PC-9 (cell line): ENCODE measurements at regions of chr12 and their contacts with region 1.

Region 1: DNA sequence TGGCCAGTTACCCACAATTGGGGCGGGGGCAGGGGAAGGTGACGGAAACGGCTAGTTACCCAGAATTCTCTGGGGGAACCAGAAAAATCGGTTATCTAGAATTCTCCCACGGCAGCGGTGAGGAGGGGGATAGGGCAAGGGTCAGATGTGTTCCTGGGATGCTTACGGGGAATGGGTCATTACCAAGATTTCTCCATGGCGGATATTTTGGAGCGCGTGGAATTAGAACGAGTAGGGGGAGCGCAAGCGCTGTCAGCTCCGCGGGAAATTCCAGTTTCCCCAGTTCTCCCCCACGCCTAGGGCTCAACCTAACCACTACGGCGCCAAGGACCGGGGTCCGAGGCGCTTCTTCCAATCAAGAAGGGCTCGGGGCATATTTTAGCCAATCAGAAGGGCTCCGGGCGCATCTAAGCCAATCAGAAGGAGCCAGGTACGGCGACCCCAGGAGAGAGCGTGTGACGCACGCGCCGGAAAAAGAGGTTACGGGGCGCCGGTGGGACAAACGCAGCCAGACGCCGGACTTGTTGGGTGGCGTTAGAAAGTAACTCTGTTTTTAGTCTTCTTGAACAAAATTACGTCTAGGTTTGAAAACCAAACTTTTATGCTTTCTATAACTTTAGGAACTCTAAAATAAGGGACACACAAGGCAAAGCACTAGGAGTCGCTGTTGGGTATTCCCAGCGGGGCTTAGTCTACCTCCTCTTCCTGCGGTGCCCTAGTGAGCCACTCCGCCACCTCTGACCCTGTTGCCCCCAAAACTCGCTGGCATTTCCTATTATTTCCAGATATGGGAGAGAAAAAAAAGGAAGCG is at the start of gene PAN2:
- DNase-seq: peak; percentile 92 to 93
- H3K4me3 ChIP-seq: peak within 1 kb of the TSS; percentile 88
- H3K27ac ChIP-seq: peak within 1 kb of the TSS; percentile 89
- H3K4me1 ChIP-seq: peaks cover 36% of the 10 kb centered on the region
- H3K27me3 ChIP-seq: no peaks in the 10 kb centered on the region
- CTCF ChIP-seq: peak; percentile 63
- total RNA-seq, gene PAN2: 78.1 and 82.8 TPM in 2 replicates

Region 2: DNA sequence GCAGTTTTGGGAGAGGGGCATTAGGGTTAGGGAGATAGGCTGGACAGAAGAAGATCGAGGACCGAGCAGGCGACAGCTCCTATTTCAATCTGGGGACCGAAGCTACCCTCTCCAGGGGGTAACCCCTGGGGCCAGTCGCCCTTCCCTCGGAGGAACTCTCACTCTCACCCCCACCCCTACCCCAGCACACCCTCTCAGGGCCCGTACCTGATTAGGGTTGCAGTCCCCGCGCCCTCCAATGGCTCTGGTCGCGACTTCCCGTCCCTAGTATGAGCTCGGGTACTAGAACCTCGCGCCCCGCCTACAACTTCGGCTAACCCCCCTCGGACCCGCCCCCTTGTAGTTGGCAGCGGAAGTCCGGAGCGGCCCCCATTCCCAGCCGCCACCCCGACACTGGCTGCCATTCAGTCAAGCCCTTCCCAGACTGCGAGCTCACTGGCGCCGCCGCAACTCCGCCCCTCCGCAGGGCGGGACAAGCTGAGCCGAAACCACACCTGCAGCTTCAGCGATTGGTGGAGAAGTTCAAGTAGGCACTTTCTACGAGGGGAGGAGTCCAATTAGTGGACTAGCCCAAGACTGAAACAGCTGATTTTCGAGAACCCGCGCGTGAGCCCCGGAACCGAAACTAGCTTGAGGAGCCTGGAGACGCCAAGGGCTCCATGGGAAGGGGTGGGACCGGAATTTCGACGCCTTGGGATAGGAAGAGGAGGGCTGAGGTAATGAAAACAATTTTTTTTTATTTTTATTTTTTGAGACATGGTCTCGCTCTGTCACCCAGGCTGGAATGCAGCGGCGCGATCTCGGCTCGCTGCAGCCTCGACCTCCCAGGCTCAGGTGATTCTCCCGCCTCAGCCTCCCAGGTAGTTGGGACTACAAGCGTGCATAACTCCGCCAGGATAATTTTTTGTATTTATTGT is 26.2 kb after region 1 on chr12 and contains the start of gene STAT2:
- CTCF ChIA-PET with region 1: interaction called, 3 read pairs
- POLR2A ChIA-PET with region 1: interaction called, 4 read pairs
- intact Hi-C with region 1: loop called (anchors 1 kb)
- DNase-seq: peak; percentile 99
- H3K4me3 ChIP-seq: peak within 1 kb of the TSS; percentile 79
- H3K27ac ChIP-seq: peak within 1 kb of the TSS; percentile 85
- H3K4me1 ChIP-seq: peaks cover 17% of the 10 kb centered on the region
- H3K27me3 ChIP-seq: no peaks in the 10 kb centered on the region
- CTCF ChIP-seq: no peak
- total RNA-seq, gene STAT2: 76.6 and 80.8 TPM in 2 replicates

Region 3: GRCh38 chr12:56999456-56999855 is 665.6 kb after region 1 on chr12:
- CTCF ChIA-PET with region 1: interaction called, 11 read pairs
- POLR2A ChIA-PET with region 1: no interaction called
- intact Hi-C with region 1: no loop called
- DNase-seq: no peak
- H3K4me3 ChIP-seq: no peak overlapping the region
- H3K27ac ChIP-seq: no peak overlapping the region
- H3K4me1 ChIP-seq: no peaks in the 10 kb centered on the region
- H3K27me3 ChIP-seq: no peaks in the 10 kb centered on the region
- CTCF ChIP-seq: no peak